Uterus (tissue), 4 donors: ENCODE measurements at regions of chr19 and their contacts with region 1.

Region 1: GRCh38 chr19:2750808-2751443 is 11.1 kb upstream of the SLC39A3 start:
- DNase-seq: no peak
- H3K4me3 ChIP-seq: no peak overlapping the region
- H3K27ac ChIP-seq: no peak overlapping the region
- H3K4me1 ChIP-seq: no peaks in the 10 kb centered on the region
- H3K27me3 ChIP-seq: no peaks in the 10 kb centered on the region
- CTCF ChIP-seq: no peak
- POLR2A ChIP-seq: no peak

Region 2: DNA sequence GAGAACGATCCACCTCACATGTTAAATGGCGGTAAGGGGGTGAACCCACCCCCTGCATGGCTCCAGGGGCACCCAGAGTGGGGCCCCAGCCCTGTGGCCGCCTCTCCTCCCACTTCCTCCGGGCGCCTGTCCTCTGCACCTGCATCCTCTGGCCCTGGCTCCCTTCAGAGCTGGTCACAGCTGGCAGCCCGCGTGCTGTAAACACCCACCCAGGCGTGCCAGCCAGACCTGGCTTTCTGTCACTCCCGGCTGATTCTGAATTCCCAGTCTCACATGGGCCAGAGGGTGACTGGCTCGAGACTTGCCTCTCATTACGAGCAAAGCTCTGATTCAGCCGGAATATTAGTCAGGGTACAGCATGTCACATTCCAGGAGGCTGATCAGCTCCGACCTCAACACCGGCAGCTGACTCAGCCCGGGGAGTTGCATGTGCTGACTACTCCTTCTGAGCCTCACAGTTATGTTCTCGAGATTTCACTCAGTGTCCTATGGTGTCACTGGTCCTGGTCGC is 123.6 kb before region 1 on chr19:
- intact Hi-C with region 1: no loop called
- DNase-seq: peak; percentile 41 to 53
- H3K4me3 ChIP-seq: no peak overlapping the region
- H3K27ac ChIP-seq: peak overlapping the region in 1 of 2 donors; percentile 53
- H3K4me1 ChIP-seq: peaks cover 0 to 3% of the 10 kb centered on the region in 2 donors
- H3K27me3 ChIP-seq: no peaks in the 10 kb centered on the region
- CTCF ChIP-seq: no peak
- POLR2A ChIP-seq: no peak

Region 3: GRCh38 chr19:2648528-2648937 is 102.4 kb before region 1 on chr19:
- intact Hi-C with region 1: loop called (anchors 10 kb)
- DNase-seq: peak; percentile 60 to 64
- H3K4me3 ChIP-seq: no peak overlapping the region
- H3K27ac ChIP-seq: no peak overlapping the region
- H3K4me1 ChIP-seq: no peaks in the 10 kb centered on the region
- H3K27me3 ChIP-seq: no peaks in the 10 kb centered on the region
- CTCF ChIP-seq: peak; percentile 62 to 90 (median 80)
- POLR2A ChIP-seq: no peak

Region 4: GRCh38 chr19:2702162-2703076 is 48.5 kb before region 1 on chr19 and contains the start of gene GNG7:
- intact Hi-C with region 1: no loop called
- DNase-seq: peak; percentile 91 to 92
- H3K4me3 ChIP-seq: peak within 1 kb of the TSS; percentile 47 to 94
- H3K27ac ChIP-seq: peak within 1 kb of the TSS; percentile 62 to 71
- H3K4me1 ChIP-seq: peaks cover 0 to 8% of the 10 kb centered on the region in 2 donors
- H3K27me3 ChIP-seq: no peaks in the 10 kb centered on the region
- CTCF ChIP-seq: no peak
- POLR2A ChIP-seq: peak; percentile 62 to 74
- total RNA-seq, gene GNG7: 0.88 to 11.1 (median 3.2) TPM

Region 5: DNA sequence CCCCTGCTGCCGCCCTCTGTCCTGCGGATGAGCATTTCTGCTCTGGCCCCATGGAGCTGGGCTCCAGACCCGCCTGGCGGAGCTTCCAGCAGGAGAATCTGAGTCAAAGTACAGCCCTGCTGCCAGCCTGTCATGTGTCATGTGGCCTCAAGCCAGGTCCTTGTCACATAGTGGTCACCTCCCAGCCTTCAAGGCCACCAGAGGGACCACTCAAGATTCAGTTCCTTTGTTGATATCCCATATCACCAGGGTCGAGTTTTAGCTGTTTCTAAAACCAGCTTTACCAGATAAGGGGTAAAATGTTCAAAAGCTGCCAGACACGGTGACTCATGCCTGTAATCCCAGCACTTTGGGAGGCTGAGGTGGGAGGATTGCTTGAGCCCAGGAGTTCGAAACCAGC is 47.8 kb after region 1 on chr19:
- intact Hi-C with region 1: no loop called
- DNase-seq: no peak
- H3K4me3 ChIP-seq: no peak overlapping the region
- H3K27ac ChIP-seq: no peak overlapping the region
- H3K4me1 ChIP-seq: no peaks in the 10 kb centered on the region
- H3K27me3 ChIP-seq: no peaks in the 10 kb centered on the region
- CTCF ChIP-seq: no peak
- POLR2A ChIP-seq: no peak